ENCODE measurements at regions of chr1 and their contacts with region 1.

Region 1: DNA sequence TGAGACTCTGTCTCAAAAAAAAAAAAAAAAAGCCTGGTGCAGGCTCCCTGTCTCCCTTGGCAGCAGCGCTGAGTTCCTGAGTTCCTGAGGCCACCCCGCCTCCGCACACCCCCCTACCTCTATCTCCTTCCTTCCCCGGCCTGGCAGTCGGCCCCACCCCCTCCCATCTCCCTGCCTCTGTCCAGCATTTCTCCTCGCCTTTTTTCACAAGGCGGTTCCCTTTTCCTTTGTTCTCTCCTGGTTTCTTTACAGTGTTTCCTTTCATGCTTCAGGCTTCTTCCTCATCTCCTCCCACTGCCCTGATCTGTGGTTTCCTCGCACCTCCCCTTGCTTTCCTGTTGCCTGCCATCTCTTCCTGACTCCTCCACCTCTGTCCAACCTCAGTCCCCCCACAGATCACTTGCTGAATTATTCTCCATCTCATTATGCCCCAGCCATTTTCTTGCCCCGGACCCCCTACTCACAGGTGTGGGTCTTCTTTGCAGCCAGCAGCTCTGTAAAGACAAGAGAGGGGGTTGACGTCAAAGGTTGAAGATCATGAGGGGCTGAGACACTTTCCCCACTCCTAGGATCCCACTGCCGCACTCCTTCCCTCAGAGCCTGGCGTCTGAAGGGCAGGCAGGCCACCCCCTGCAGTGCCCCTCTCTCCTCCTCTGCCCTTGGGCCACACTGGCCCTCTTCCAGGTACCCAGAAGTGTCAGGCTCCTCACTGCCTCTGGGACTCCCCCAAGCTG is 2.5 kb downstream of the RORC start:
- DNase-seq: no peak
- ATAC-seq: no peak
- H3K4me3 ChIP-seq: peak overlapping the region in 1 of 4 donors; percentile 82
- H3K27ac ChIP-seq: peak overlapping the region in 1 of 4 donors; percentile 8
- H3K4me1 ChIP-seq: peaks cover 23 to 32% (median 27%) of the 10 kb centered on the region in 3 donors
- H3K27me3 ChIP-seq: no peaks in the 10 kb centered on the region
- CTCF ChIP-seq: no peak

Region 2: DNA sequence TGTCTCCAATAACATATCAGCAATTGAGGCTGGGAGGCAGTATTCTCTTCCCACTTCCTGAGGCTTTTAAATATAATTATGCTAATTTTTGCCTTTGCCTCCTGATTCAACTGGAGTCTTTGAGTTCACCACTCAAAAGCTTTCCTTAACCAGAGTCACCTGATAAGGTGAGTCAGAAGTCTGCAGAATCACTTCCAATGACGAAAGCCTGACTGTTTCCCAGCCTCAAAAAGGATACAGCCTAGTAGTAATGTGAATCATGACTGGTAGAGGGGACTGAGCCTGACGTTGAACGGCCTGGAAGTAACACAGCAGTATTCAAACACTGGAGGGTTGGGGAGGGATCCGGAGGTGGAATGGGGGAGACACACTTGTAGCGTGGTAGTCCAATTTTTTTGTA is 55.4 kb before region 1 on chr1:
- intact Hi-C with region 1: loop called in 1 of 3 experiments (anchors 10 kb)
- DNase-seq: no peak
- ATAC-seq: peak in 1 of 4 donors; percentile 27
- H3K4me3 ChIP-seq: no peak overlapping the region
- H3K27ac ChIP-seq: no peak overlapping the region
- H3K4me1 ChIP-seq: no peaks in the 10 kb centered on the region
- H3K27me3 ChIP-seq: no peaks in the 10 kb centered on the region
- CTCF ChIP-seq: no peak

Measured in pancreas (tissue), 10 donors.